Endothelial cell of umbilical vein (primary cell): ENCODE measurements at regions of chr14 and their contacts with region 1.

Region 1: DNA sequence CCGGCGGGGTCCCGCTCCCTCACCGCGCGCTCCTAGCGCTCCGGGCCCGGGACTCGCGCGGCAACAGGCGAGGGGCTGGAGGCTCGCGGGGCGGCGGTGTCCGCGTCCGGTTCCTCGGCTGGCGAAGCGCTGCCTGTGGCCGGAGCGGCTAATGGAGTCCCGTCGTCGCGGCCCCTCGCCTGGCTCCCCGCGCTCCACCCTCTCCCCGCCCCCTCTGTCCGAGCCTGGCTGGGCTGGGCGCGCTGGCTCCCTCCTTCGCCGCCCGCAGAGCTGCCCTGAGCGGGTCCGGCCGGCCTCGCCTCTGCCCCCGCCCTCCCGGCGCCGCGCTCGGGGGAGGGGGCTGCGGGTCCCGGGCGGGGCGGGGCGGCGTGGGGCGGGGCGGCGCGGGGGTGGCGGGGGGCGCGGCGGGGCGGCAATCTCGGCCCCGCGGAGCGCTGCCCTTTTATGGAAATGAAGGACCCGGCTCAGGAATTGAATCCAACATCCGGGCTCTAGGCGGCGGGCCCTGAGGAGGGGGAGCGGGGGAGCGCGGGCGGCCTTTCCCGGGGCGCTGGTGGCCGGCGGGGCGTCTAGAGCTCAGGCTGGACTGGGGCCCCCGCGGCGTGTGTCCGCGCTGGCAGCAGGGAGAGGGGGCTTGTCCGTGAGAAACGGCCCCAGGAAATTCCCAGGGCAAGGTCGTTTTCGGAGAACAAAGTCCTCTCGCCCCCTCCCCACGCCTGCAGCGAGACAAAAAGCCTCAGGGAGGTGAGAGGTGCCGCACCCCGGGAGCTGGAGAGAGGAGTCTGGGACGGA is at the start of gene FERMT2:
- DNase-seq: peak; percentile 87
- H3K4me3 ChIP-seq: peak within 1 kb of the TSS; percentile 74 to 96 (median 85)
- H3K27ac ChIP-seq: peak within 1 kb of the TSS; percentile 85
- H3K4me1 ChIP-seq: peaks cover 24% of the 10 kb centered on the region
- H3K27me3 ChIP-seq: no peaks in the 10 kb centered on the region
- CTCF ChIP-seq: no peak
- POLR2A ChIP-seq: peak; percentile 50
- total RNA-seq, gene FERMT2: 108 and 113 TPM in 2 replicates

Region 2: DNA sequence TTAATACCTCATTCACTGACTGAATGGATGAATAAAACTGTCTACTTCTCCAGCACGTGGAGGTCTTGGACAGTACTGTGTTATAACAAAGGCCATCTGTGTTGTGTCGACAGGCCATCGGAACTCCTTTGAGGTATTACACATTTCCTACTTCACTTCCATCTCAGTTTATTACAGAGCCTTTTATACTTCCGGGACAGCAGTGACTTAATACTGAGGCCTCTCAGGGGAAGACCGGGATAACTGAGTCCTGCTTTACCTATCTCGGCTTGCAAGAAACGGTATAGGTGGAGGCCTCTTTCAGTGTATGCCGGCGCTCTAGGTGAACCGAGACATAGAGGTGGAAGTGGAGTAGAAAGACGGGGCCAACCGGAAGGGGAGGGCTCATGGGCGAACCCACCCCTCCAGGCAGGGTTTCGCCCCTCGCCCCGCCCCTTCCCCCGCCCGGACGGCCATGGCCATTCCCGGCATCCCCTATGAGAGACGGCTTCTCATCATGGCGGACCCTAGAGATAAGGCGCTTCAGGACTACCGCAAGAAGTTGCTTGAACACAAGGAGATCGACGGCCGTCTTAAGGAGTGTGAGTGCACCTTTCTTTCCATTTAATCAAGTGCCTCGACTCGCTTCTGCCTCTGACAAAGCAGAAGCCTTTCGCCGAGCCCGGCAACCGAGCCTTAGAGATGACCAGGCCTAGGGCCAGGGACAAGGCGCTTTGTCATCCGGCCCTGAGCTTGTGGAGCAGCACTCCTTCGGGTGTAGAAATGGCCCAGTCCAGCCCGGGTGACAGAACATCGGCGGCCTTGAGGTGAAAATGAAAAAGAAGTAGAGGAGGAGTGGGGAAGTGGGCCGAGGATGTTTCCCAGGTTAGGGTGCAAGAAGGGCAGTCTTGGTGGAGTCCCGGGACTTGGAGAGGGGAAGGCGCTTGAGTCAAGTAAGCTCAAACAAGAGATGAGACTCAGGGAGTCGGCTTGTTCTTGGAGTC is 244.1 kb before region 1 on chr14 and contains the start of gene PSMC6:
- CTCF ChIA-PET with region 1: no interaction called
- POLR2A ChIA-PET with region 1: no interaction called
- dilution Hi-C with region 1: no loop called
- intact Hi-C with region 1: loop called (anchors 10 kb)
- DNase-seq: peak; percentile 94
- H3K4me3 ChIP-seq: peak within 1 kb of the TSS; percentile 40 to 96 (median 47)
- H3K27ac ChIP-seq: peak within 1 kb of the TSS; percentile 82
- H3K4me1 ChIP-seq: peaks cover 19% of the 10 kb centered on the region
- H3K27me3 ChIP-seq: no peaks in the 10 kb centered on the region
- CTCF ChIP-seq: no peak
- POLR2A ChIP-seq: peak; percentile 81
- total RNA-seq, gene PSMC6: 92.1 and 103 TPM in 2 replicates

Region 3: GRCh38 chr14:52729925-52730667 is 221.0 kb before region 1 on chr14 and contains the start of gene STYX:
- CTCF ChIA-PET with region 1: interaction called, 3 read pairs
- POLR2A ChIA-PET with region 1: no interaction called
- dilution Hi-C with region 1: no loop called
- intact Hi-C with region 1: loop called (anchors 1 kb)
- DNase-seq: peak; percentile 99
- H3K4me3 ChIP-seq: peak within 1 kb of the TSS; percentile 50 to 98 (median 88)
- H3K27ac ChIP-seq: peak within 1 kb of the TSS; percentile 29
- H3K4me1 ChIP-seq: peaks cover 3% of the 10 kb centered on the region
- H3K27me3 ChIP-seq: no peaks in the 10 kb centered on the region
- CTCF ChIP-seq: no peak
- POLR2A ChIP-seq: peak; percentile 78
- total RNA-seq, gene STYX: 21.0 and 21.3 TPM in 2 replicates

Region 4: DNA sequence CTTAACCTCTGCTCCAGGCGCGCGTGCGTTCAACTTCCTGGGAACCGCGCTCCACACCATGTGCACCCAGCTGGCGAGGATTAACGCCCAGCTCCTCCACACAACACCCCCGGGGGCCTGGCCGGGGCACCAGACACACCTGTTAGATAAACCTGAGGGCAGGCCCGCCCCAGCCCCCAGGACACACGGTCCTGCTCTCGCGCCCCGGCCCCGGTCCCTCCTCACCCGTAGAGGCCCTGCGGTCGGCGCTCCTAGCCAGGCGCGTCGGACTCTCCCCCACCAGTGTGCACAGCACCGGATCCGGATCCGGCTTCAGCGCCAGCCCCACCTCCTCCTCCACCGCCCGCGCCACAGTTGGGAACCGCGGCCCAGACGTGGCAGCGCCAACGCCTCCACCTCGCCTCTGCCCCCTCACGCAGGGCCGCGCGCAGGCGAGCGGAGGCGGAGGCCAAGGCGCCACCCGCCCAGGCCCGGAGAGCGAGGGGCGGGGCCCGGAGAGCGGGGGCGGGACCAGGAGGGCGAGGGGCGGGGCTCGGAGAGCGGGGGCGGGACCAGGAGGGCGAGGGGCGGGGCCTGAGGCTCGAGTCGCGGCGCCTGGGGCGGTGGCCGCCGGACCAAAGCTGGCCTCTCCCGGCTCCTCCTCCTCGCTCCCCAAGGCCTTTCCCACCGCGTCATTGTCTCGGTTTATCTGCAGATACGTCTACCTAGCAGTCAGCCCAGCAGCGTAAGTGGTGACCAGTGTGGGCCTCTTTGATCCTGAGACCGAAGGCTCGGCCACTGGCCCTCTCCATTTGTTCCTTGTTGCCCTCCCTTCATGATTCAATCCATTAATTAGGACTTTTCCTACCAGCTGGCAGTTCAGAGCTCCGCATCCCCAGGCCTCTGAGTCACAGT is 159.6 kb before region 1 on chr14 and contains the start of gene GNPNAT1:
- CTCF ChIA-PET with region 1: interaction called, 4 read pairs
- POLR2A ChIA-PET with region 1: no interaction called
- dilution Hi-C with region 1: no loop called
- intact Hi-C with region 1: loop called (anchors 1 kb)
- DNase-seq: peak; percentile 94
- H3K4me3 ChIP-seq: peak within 1 kb of the TSS; percentile 61 to 99 (median 84)
- H3K27ac ChIP-seq: peak within 1 kb of the TSS; percentile 88
- H3K4me1 ChIP-seq: peaks cover 25% of the 10 kb centered on the region
- H3K27me3 ChIP-seq: no peaks in the 10 kb centered on the region
- CTCF ChIP-seq: no peak
- POLR2A ChIP-seq: peak; percentile 96
- total RNA-seq, gene GNPNAT1: 38.2 and 38.9 TPM in 2 replicates

Region 5: GRCh38 chr14:52824507-52824906 is 126.6 kb before region 1 on chr14:
- CTCF ChIA-PET with region 1: interaction called, 16 read pairs
- POLR2A ChIA-PET with region 1: interaction called, 8 read pairs
- dilution Hi-C with region 1: no loop called
- intact Hi-C with region 1: no loop called
- DNase-seq: peak; percentile 17
- H3K4me3 ChIP-seq: no peak overlapping the region
- H3K27ac ChIP-seq: no peak overlapping the region
- H3K4me1 ChIP-seq: peaks cover 4% of the 10 kb centered on the region
- H3K27me3 ChIP-seq: no peaks in the 10 kb centered on the region
- CTCF ChIP-seq: no peak
- POLR2A ChIP-seq: no peak

Region 6: DNA sequence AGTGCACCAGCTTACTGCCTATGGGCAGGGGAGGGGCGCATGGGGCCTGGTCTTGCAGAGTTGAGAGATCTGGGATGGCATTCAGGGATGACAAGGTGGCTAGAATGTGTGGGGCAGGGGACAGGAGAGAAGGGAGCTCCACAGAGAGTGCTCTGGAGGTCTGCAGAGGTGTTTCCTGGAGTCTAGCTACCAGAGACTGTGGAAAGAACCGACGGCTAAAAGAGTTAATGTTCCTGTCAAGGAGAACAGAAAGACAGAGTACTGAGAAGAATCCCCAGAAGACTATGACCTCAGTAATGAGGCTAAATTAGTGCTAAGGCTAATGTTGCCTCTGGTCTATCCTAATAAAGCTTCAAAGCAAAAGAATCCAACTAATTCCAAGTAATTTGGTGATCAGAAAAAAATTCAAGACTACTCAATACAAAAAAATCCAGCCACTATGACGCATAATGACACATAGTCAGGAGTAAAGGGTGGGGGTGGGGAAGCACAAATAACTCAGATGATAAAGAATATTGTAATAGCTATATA is 45.0 kb before region 1 on chr14:
- CTCF ChIA-PET with region 1: interaction called, 3 read pairs
- POLR2A ChIA-PET with region 1: interaction called, 3 read pairs
- dilution Hi-C with region 1: no loop called
- intact Hi-C with region 1: loop called (anchors 2 kb)
- DNase-seq: peak; percentile 75
- H3K4me3 ChIP-seq: no peak overlapping the region
- H3K27ac ChIP-seq: peak overlapping the region; percentile 77
- H3K4me1 ChIP-seq: peaks cover 48% of the 10 kb centered on the region
- H3K27me3 ChIP-seq: no peaks in the 10 kb centered on the region
- CTCF ChIP-seq: no peak
- POLR2A ChIP-seq: no peak

Region 7: DNA sequence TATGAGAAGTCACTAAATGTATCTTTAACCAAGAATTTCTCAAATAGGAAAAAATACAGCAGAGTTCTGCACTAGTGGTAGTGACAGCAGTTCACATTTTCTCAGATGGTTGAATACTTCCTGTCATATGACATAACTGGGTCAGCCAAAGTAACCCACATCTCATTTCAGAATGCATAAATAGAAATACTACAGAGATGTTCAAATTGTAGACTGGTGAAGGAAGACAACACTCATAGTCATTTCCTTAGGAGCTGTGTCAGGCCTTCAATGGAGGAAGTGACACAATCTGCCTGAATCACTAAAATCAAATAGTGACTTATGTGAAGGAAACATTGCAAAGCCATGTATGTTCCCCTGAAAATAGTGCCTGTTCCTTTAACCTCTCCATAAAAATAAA is 32.6 kb before region 1 on chr14:
- CTCF ChIA-PET with region 1: interaction called, 5 read pairs
- POLR2A ChIA-PET with region 1: interaction called, 5 read pairs
- dilution Hi-C with region 1: no loop called
- intact Hi-C with region 1: loop called (anchors 1 kb)
- DNase-seq: peak; percentile 95
- H3K4me3 ChIP-seq: no peak overlapping the region
- H3K27ac ChIP-seq: peak overlapping the region; percentile 91
- H3K4me1 ChIP-seq: peaks cover 42% of the 10 kb centered on the region
- H3K27me3 ChIP-seq: no peaks in the 10 kb centered on the region
- CTCF ChIP-seq: no peak
- POLR2A ChIP-seq: no peak